ENCODE measurements at regions of chr12 and their contacts with region 1.

Region 1: GRCh38 chr12:54379401-54380201 is 4.9 kb downstream of the ZNF385A start:
- DNase-seq: peak; percentile 96
- ATAC-seq: peak; percentile 86
- H3K4me3 Mint-ChIP-seq: peak overlapping the region; percentile 47
- H3K27ac Mint-ChIP-seq: no peak overlapping the region
- H3K4me1 Mint-ChIP-seq: peaks cover 10% of the 10 kb centered on the region
- H3K27me3 Mint-ChIP-seq: no peaks in the 10 kb centered on the region

Region 2: DNA sequence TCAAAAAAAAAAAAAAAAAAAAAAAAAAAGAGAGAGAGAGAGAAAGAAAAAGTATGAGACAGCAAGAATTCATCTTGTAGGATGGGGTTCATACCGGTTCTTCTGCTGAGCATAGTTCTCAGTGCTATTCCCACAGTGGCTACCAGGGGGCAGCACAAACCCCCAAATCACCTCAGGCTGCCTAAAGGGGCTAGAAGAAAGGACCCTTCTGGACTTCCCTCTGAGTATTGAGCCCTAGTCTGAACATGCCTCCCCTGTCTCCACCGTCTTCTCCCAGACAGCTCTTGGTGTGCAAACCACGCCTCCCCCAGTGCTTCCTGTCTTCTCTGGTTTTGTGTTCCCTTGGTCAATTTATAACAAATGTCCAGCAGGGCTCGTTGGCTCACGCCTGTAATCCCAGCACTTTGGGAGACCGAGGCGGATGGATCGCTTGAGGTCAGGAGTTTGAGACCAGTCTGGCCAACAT is 159.5 kb before region 1 on chr12:
- CTCF ChIA-PET with region 1: interaction called, 17 read pairs
- POLR2A ChIA-PET with region 1: no interaction called
- intact Hi-C with region 1: loop called in 1 of 2 experiments (anchors 1 kb)
- DNase-seq: peak; percentile 84
- ATAC-seq: peak; percentile 58
- H3K4me3 Mint-ChIP-seq: no peak overlapping the region
- H3K27ac Mint-ChIP-seq: no peak overlapping the region
- H3K4me1 Mint-ChIP-seq: peaks cover 26% of the 10 kb centered on the region
- H3K27me3 Mint-ChIP-seq: peaks cover 12% of the 10 kb centered on the region

Region 3: DNA sequence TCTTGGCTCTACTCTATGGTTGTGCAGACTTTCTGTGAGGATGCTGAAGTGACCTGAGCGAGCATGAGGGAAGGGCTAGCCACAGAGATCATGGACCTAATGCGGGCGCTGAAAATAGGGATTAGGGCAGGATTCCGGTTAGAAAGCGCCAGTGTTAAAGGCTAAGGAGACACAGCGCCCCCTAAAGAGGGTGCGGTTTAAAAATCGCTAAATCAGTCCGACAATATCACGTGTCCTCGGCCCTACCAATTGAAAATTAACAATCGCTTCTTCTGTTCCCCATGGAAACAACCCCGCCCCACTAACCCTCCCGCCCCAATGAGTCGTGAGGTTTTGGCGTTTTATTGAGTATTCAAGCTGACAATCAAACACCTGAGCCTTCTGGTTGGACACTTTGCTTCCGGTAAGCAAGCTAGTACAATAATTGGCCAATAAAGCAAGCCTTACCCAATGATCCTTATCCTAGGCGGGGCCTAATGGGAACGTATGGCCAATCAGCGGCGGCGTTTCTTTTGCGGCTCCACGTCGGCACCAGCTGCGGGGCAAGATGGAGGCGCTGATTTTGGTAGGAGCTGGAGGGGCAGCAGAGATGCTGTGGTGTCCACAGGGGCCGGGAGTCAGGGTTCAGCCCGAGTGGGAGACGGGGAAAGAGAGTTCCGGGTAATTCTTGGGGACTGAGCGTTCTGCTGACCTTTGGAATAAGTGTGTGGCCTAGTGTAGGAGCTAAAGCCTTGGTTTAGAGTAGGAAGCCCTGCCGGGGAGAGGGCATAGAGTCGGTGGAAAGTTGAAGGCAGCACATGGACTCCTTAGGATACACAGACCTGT is 54.8 kb before region 1 on chr12 and contains the start of gene COPZ1:
- CTCF ChIA-PET with region 1: interaction called, 10 read pairs
- POLR2A ChIA-PET with region 1: no interaction called
- intact Hi-C with region 1: no loop called
- DNase-seq: peak; percentile 96
- ATAC-seq: peak; percentile 99
- H3K4me3 Mint-ChIP-seq: peak within 1 kb of the TSS; percentile 96
- H3K27ac Mint-ChIP-seq: peak within 1 kb of the TSS; percentile 92
- H3K4me1 Mint-ChIP-seq: peaks cover 36% of the 10 kb centered on the region
- H3K27me3 Mint-ChIP-seq: no peaks in the 10 kb centered on the region
- total RNA-seq, gene COPZ1: 95.2 to 98.7 TPM

Region 4: GRCh38 chr12:54352022-54352531 is 27.5 kb before region 1 on chr12:
- CTCF ChIA-PET with region 1: interaction called, 17 read pairs
- POLR2A ChIA-PET with region 1: no interaction called
- intact Hi-C with region 1: no loop called
- DNase-seq: peak; percentile 75
- ATAC-seq: peak; percentile 91
- H3K4me3 Mint-ChIP-seq: peak overlapping the region; percentile 55
- H3K27ac Mint-ChIP-seq: peak overlapping the region; percentile 48
- H3K4me1 Mint-ChIP-seq: peaks cover 22% of the 10 kb centered on the region
- H3K27me3 Mint-ChIP-seq: no peaks in the 10 kb centered on the region

Region 5: GRCh38 chr12:54368709-54369583 is 10.7 kb before region 1 on chr12:
- CTCF ChIA-PET with region 1: interaction called, 33 read pairs
- POLR2A ChIA-PET with region 1: no interaction called
- intact Hi-C with region 1: loop called in 1 of 2 experiments (anchors 1 kb)
- DNase-seq: peak; percentile 96
- ATAC-seq: peak; percentile 82
- H3K4me3 Mint-ChIP-seq: peak overlapping the region; percentile 4
- H3K27ac Mint-ChIP-seq: no peak overlapping the region
- H3K4me1 Mint-ChIP-seq: peaks cover 41% of the 10 kb centered on the region
- H3K27me3 Mint-ChIP-seq: peaks cover 2% of the 10 kb centered on the region

Region 6: DNA sequence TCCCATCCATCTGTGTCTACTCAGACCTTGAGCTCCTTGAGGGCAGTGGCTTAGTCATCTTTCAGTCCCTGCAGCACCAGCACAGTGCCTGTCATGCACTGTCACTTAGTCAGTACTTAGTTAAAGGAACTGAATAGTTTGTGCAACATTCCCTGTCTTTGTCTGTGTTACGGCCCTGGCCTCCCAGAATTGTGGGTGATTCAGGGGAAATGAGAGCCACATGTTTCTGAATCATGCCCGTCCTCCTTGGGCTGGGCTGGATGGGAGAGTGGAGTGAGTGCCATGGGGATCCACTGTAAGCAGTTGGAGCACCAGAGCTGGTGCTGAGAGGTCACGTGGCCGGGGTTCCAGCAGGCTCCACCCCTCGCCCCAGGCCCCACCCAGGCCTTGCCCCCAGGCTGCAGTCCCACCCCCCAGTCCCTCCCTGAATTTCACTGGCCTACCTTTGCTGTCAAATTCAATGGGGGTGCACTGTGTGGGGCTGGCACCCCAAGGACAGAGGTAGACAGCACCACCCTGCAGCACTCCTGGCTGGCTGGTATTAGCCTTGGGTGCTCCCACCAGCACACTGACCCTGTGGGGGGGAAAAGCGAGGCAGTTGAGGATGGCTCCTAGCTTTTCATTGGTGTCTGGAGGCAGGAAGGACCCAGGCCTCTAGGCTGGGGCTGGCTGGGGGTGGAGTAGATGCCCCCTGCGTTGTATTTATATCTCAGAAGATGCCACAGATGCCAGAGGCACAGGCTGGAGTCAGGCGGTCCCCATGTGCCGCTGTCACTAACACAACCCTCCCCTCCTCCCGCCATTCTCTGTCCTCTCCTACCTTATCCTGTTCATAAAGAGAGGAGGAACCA is 32.0 kb after region 1 on chr12:
- CTCF ChIA-PET with region 1: interaction called, 22 read pairs
- POLR2A ChIA-PET with region 1: no interaction called
- intact Hi-C with region 1: no loop called
- DNase-seq: peak; percentile 80
- ATAC-seq: peak; percentile 85
- H3K4me3 Mint-ChIP-seq: peak overlapping the region; percentile 60
- H3K27ac Mint-ChIP-seq: peak overlapping the region; percentile 89
- H3K4me1 Mint-ChIP-seq: peaks cover 55% of the 10 kb centered on the region
- H3K27me3 Mint-ChIP-seq: no peaks in the 10 kb centered on the region

Region 7: GRCh38 chr12:55019779-55020178 is 640.2 kb after region 1 on chr12 and contains the start of gene NEUROD4:
- CTCF ChIA-PET with region 1: no interaction called
- POLR2A ChIA-PET with region 1: no interaction called
- intact Hi-C with region 1: no loop called
- DNase-seq: peak; percentile 46
- ATAC-seq: no peak
- H3K4me3 Mint-ChIP-seq: no peak within 1 kb of the TSS
- H3K27ac Mint-ChIP-seq: no peak within 1 kb of the TSS
- H3K4me1 Mint-ChIP-seq: peaks cover 5% of the 10 kb centered on the region
- H3K27me3 Mint-ChIP-seq: peaks cover 27% of the 10 kb centered on the region
- total RNA-seq, gene NEUROD4: not detected